MCF 10A (cell line): ENCODE measurements at regions of chr12 and their contacts with region 1.

Region 1: GRCh38 chr12:34022079-34022830 is at the start of gene ALG10:
- DNase-seq: peak; percentile 99
- H3K4me3 Mint-ChIP-seq: peak within 1 kb of the TSS; percentile 95
- H3K27ac Mint-ChIP-seq: peak within 1 kb of the TSS; percentile 94
- H3K4me1 Mint-ChIP-seq: no peaks in the 10 kb centered on the region
- H3K27me3 Mint-ChIP-seq: peaks cover 11% of the 10 kb centered on the region
- CTCF ChIP-seq: peak; percentile 51
- total RNA-seq, gene ALG10: 7.6 and 7.8 TPM in 2 replicates

Region 2: DNA sequence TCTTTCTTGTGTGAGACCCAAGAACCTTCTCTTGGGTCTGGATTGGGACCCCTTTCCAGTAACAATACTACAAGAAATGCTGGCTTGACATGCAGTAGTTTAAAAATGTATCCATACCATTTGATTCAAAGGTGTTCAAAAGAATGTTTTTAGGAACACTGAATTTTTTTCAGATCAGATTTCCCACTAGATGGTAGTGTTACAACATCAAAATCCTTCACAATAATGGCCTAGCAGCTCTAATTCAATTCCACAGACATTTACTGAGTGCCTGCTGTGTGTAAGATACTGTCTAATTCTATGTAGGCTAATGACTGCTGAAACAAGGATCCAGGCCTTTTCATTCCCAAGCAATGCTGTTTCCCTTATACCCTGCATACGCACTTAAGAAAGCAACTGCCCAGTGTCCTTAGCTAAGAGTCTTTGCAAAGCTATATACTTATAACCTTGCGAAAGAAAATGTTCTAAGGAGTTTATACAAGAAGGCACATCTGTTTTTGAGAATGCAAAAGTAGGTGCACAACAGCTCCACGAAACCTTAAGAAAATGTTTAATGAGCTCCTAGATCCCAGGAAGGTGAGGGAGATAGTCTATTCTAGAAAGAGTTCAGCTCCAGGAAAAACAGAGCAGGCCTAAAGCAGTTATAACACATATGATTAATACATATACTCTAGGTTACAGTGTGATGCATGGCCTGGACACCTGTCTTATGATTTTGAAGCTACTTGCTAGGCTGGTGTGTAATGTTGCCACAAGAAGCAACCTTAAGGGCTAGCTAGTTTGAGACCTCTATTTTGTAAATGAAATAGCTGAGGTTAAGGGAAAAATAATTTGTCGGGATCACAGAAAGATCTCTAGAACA is 1074.8 kb before region 1 on chr12:
- CTCF ChIA-PET with region 1: interaction called, 62 read pairs
- POLR2A ChIA-PET with region 1: interaction called, 6 read pairs
- intact Hi-C with region 1: no loop called
- DNase-seq: peak; percentile 45
- H3K4me3 Mint-ChIP-seq: no peak overlapping the region
- H3K27ac Mint-ChIP-seq: peak overlapping the region; percentile 69
- H3K4me1 Mint-ChIP-seq: peaks cover 6% of the 10 kb centered on the region
- H3K27me3 Mint-ChIP-seq: peaks cover 11% of the 10 kb centered on the region
- CTCF ChIP-seq: peak; percentile 45

Region 3: DNA sequence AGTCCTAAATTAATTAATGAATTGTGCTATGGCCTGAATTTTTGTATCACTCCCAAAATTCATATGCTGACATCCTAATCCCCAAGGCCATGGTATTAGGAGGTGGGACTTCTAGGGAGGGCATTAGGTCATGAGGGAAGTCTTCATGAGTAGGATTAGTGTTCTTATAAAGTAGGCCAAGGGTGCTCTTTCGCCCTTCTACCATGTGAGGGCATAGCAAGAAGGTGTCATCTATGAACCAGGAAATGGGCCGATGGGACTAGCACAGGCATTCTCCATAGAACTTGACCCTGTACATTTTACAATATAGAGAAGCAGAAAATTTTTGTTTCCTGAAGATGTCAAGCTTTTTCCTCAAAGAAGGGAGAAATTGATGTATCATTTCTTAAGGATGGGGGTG is 595.2 kb before region 1 on chr12:
- CTCF ChIA-PET with region 1: interaction called, 10 read pairs
- POLR2A ChIA-PET with region 1: interaction called, 3 read pairs
- intact Hi-C with region 1: no loop called
- DNase-seq: peak; percentile 54
- H3K4me3 Mint-ChIP-seq: no peak overlapping the region
- H3K27ac Mint-ChIP-seq: no peak overlapping the region
- H3K4me1 Mint-ChIP-seq: no peaks in the 10 kb centered on the region
- H3K27me3 Mint-ChIP-seq: peaks cover 23% of the 10 kb centered on the region
- CTCF ChIP-seq: no peak

Region 4: DNA sequence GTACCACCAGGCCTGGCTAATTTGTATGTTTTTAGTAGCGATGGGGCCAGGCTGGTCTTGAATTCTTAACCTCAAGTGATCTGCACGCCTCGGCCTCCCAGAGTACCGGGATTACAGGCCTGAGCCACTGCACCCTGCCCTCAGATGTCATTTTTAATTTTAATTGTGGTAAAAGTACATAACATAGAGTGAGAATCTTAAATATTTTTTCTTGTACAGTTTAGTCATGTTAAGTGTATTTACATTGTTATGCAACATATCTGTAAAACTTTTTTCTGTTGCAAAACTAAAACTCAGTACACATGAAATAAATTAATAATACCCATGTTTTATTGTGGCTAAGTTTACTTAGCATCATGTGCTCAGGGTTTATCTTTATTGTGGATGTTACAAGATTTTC is 231.4 kb after region 1 on chr12:
- CTCF ChIA-PET with region 1: no interaction called
- POLR2A ChIA-PET with region 1: no interaction called
- intact Hi-C with region 1: no loop called
- DNase-seq: no peak
- H3K4me3 Mint-ChIP-seq: no peak overlapping the region
- H3K27ac Mint-ChIP-seq: no peak overlapping the region
- H3K4me1 Mint-ChIP-seq: no peaks in the 10 kb centered on the region
- H3K27me3 Mint-ChIP-seq: no peaks in the 10 kb centered on the region
- CTCF ChIP-seq: no peak